CD4-positive, alpha-beta memory T cell (primary cell): ENCODE measurements at regions of chr12 and their contacts with region 1.

Region 1: GRCh38 chr12:9027161-9028059 is 38.1 kb downstream of the KLRG1 start:
- DNase-seq: no peak
- H3K4me3 ChIP-seq: no peak overlapping the region
- H3K4me3 Mint-ChIP-seq: peak overlapping the region; percentile 35 to 80 (median 67)
- H3K27ac ChIP-seq: peak overlapping the region; percentile 35
- H3K27ac Mint-ChIP-seq: peak overlapping the region in 6 of 7 donors; percentile 89 to 97 (median 92)
- H3K4me1 ChIP-seq: peaks cover 87% of the 10 kb centered on the region
- H3K4me1 Mint-ChIP-seq: peaks cover 31 to 51% (median 36%) of the 10 kb centered on the region in 4 donors
- H3K27me3 ChIP-seq: no peaks in the 10 kb centered on the region
- H3K27me3 Mint-ChIP-seq: no peaks in the 10 kb centered on the region

Region 2: DNA sequence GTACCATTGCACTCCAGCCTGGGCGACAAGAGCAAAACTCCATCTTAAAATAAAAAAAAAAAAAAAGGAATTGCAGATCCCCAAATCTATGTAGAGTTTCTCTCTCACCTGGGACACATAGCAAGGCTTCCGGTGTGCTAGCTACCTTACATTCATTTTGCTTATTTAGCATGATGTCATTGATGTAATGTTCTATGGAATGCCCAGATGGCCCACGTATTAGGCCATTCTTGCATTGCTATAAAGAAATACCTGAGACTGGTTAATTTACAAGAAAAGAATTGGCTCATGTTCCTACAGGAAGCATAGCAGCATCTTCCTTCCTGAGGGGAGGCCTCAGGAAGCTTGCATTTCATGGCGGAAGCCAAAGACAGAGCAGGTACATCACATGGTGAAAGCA is 241.9 kb before region 1 on chr12:
- CTCF ChIA-PET with region 1: no interaction called
- POLR2A ChIA-PET with region 1: no interaction called
- intact Hi-C with region 1: no loop called
- DNase-seq: no peak
- H3K4me3 ChIP-seq: no peak overlapping the region
- H3K4me3 Mint-ChIP-seq: peak overlapping the region in 1 of 8 donors; percentile 35
- H3K27ac ChIP-seq: no peak overlapping the region
- H3K27ac Mint-ChIP-seq: no peak overlapping the region
- H3K4me1 ChIP-seq: no peaks in the 10 kb centered on the region
- H3K4me1 Mint-ChIP-seq: no peaks in the 10 kb centered on the region
- H3K27me3 ChIP-seq: no peaks in the 10 kb centered on the region
- H3K27me3 Mint-ChIP-seq: no peaks in the 10 kb centered on the region

Region 3: GRCh38 chr12:8960176-8960575 is 67.2 kb before region 1 on chr12:
- CTCF ChIA-PET with region 1: interaction called, 561 read pairs
- POLR2A ChIA-PET with region 1: interaction called, 492 read pairs
- intact Hi-C with region 1: no loop called
- DNase-seq: peak in 4 of 5 donors; percentile 49 to 59 (median 52)
- H3K4me3 ChIP-seq: peak overlapping the region in 1 of 2 donors; percentile 10
- H3K4me3 Mint-ChIP-seq: peak overlapping the region; percentile 27 to 80 (median 68)
- H3K27ac ChIP-seq: peak overlapping the region; percentile 44
- H3K27ac Mint-ChIP-seq: peak overlapping the region; percentile 90 to 96 (median 92)
- H3K4me1 ChIP-seq: peaks cover 68% of the 10 kb centered on the region
- H3K4me1 Mint-ChIP-seq: peaks cover 46 to 86% (median 59%) of the 10 kb centered on the region in 4 donors
- H3K27me3 ChIP-seq: no peaks in the 10 kb centered on the region
- H3K27me3 Mint-ChIP-seq: no peaks in the 10 kb centered on the region

Region 4: DNA sequence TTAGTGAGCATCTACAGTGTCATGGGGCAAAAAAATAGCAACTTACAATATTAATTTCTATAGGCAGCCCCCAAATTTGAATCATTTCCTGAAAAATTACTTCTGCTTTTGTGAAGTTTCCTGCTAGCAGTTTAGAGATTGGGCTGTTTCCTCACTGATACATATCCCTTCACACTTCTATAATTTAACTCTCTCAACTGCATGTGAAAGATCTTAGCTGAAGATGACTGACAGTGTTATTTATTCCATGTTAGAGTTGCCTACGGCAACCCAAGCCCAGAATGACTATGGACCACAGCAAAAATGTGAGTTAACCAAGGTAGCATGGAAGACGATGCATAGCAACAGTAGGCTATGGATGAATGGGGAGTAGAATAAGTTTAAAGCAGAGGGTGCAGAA is 38.0 kb before region 1 on chr12 and contains the start of gene KLRG1:
- CTCF ChIA-PET with region 1: interaction called, 4 read pairs
- POLR2A ChIA-PET with region 1: interaction called, 23 read pairs
- intact Hi-C with region 1: loop called (anchors 1 kb)
- DNase-seq: peak in 4 of 5 donors; percentile 15 to 57 (median 26)
- H3K4me3 ChIP-seq: peak within 1 kb of the TSS in 1 of 2 donors; percentile 22
- H3K4me3 Mint-ChIP-seq: peak within 1 kb of the TSS; percentile 66 to 99 (median 89)
- H3K27ac ChIP-seq: peak within 1 kb of the TSS; percentile 24
- H3K27ac Mint-ChIP-seq: peak within 1 kb of the TSS; percentile 86 to 96 (median 92)
- H3K4me1 ChIP-seq: peaks cover 76% of the 10 kb centered on the region
- H3K4me1 Mint-ChIP-seq: peaks cover 46 to 72% (median 57%) of the 10 kb centered on the region in 4 donors
- H3K27me3 ChIP-seq: no peaks in the 10 kb centered on the region
- H3K27me3 Mint-ChIP-seq: no peaks in the 10 kb centered on the region
- total RNA-seq, gene KLRG1: 51.2 to 55.8 TPM

Region 5: GRCh38 chr12:8996682-8997360 is 30.6 kb before region 1 on chr12:
- CTCF ChIA-PET with region 1: interaction called, 8 read pairs
- POLR2A ChIA-PET with region 1: interaction called, 23 read pairs
- intact Hi-C with region 1: loop called (anchors 1 kb)
- DNase-seq: peak in 4 of 5 donors; percentile 4 to 46 (median 16)
- H3K4me3 ChIP-seq: no peak overlapping the region
- H3K4me3 Mint-ChIP-seq: peak overlapping the region in 7 of 8 donors; percentile 66 to 95 (median 79)
- H3K27ac ChIP-seq: peak overlapping the region; percentile 27
- H3K27ac Mint-ChIP-seq: peak overlapping the region; percentile 71 to 93 (median 88)
- H3K4me1 ChIP-seq: peaks cover 81% of the 10 kb centered on the region
- H3K4me1 Mint-ChIP-seq: peaks cover 51 to 82% (median 67%) of the 10 kb centered on the region in 4 donors
- H3K27me3 ChIP-seq: no peaks in the 10 kb centered on the region
- H3K27me3 Mint-ChIP-seq: no peaks in the 10 kb centered on the region

Region 6: GRCh38 chr12:9039397-9039977 is 12.1 kb after region 1 on chr12:
- CTCF ChIA-PET with region 1: interaction called, 93 read pairs
- POLR2A ChIA-PET with region 1: interaction called, 51 read pairs
- intact Hi-C with region 1: loop called (anchors 1 kb)
- DNase-seq: peak in 4 of 5 donors; percentile 67 to 75 (median 70)
- H3K4me3 ChIP-seq: no peak overlapping the region
- H3K4me3 Mint-ChIP-seq: peak overlapping the region in 6 of 8 donors; percentile 5 to 57 (median 50)
- H3K27ac ChIP-seq: peak overlapping the region; percentile 2
- H3K27ac Mint-ChIP-seq: peak overlapping the region; percentile 38 to 82 (median 66)
- H3K4me1 ChIP-seq: peaks cover 68% of the 10 kb centered on the region
- H3K4me1 Mint-ChIP-seq: peaks cover 45 to 84% (median 64%) of the 10 kb centered on the region in 4 donors
- H3K27me3 ChIP-seq: no peaks in the 10 kb centered on the region
- H3K27me3 Mint-ChIP-seq: no peaks in the 10 kb centered on the region